ENCODE measurements at regions of chr15 and their contacts with region 1.

Region 1: GRCh38 chr15:41774062-41774881 is at the start of gene MAPKBP1:
- DNase-seq: peak; percentile 99
- ATAC-seq: peak; percentile 93
- H3K4me3 Mint-ChIP-seq: peak within 1 kb of the TSS; percentile 91
- H3K27ac Mint-ChIP-seq: peak within 1 kb of the TSS; percentile 95
- H3K4me1 Mint-ChIP-seq: peaks cover 55% of the 10 kb centered on the region
- H3K27me3 Mint-ChIP-seq: no peaks in the 10 kb centered on the region
- total RNA-seq, gene MAPKBP1: 24.7 to 33.1 TPM

Region 2: GRCh38 chr15:41465822-41466421 is 308.4 kb before region 1 on chr15:
- CTCF ChIA-PET with region 1: interaction called, 18 read pairs
- DNase-seq: no peak
- ATAC-seq: peak; percentile 39
- H3K4me3 Mint-ChIP-seq: no peak overlapping the region
- H3K27ac Mint-ChIP-seq: no peak overlapping the region
- H3K4me1 Mint-ChIP-seq: peaks cover 12% of the 10 kb centered on the region
- H3K27me3 Mint-ChIP-seq: no peaks in the 10 kb centered on the region

Region 3: DNA sequence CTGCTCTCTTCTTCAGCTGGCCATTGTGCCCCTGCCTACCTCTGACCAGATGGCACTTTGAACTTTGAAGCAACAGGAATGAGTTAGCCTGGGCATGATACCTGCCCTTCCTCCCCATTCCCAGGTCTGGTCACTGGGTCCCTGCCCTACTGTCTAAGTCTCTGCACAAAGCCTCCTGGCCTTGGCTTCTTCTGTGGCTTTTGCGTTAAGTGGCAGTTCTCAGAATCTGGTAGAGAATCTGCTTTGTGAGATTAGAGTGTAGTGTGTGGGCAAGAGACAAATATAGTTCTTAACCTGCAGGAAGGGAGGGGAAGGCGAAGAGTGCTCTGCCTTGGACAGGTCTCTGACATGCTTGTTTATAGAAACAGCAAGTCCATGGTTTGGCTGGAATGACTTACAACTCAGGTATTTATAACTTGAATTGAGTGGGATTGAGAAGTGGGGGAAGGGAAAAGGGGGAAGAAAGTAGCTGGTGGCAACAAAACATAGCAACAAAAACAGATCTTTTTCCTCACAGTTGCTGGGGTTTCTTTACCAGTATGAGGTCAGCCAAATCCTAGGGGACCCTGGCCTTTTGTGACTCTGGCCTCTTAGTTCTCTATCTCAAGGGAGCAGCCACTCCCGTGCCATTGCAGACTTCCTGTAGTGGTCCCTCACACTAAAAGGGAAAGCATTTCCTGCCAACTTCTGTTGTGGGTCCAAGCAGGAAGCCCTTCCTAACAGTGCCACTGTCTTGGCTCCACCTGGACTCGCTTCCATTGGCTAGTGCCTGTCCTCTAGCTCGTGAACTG is 16.7 kb after region 1 on chr15:
- CTCF ChIA-PET with region 1: interaction called, 98 read pairs
- DNase-seq: no peak
- ATAC-seq: peak; percentile 79
- H3K4me3 Mint-ChIP-seq: peak overlapping the region; percentile 18
- H3K27ac Mint-ChIP-seq: peak overlapping the region; percentile 71
- H3K4me1 Mint-ChIP-seq: peaks cover 34% of the 10 kb centered on the region
- H3K27me3 Mint-ChIP-seq: no peaks in the 10 kb centered on the region

Region 4: DNA sequence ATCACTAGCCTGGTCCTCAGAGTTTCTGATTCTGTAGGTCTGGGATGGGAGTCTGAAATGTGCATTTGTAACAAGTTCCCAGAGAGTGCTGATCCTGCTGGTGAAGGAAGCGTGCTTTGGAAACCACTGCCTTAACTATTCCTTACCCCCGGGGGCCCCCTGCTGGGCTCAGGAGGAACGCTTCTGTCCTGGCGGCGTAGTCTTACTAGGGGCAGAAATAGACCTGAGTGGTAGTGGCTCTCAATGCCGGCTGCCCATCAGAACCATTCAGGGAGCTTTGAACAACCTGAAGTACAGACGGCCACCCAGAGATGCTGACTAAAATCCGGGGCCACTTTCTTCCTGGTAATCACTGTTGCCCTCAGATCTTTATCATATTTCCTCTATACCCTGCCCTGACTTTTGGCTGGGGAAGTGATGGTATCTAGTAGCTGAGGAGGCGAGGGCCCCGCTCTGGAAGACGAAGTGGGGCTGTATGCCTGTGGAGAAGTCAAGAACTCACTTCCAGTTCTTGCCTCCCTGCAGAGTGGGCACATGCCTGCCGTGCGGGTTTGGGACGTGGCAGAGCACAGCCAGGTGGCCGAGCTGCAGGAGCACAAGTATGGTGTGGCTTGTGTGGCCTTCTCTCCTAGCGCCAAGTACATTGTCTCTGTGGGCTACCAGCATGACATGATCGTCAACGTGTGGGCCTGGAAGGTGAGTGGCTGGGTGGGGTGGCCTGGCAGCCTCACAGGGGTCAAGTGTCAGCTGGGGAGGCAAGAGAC is 37.3 kb after region 1 on chr15:
- CTCF ChIA-PET with region 1: interaction called, 247 read pairs
- DNase-seq: peak; percentile 83
- ATAC-seq: peak; percentile 91
- H3K4me3 Mint-ChIP-seq: no peak overlapping the region
- H3K27ac Mint-ChIP-seq: peak overlapping the region; percentile 56
- H3K4me1 Mint-ChIP-seq: peaks cover 25% of the 10 kb centered on the region
- H3K27me3 Mint-ChIP-seq: no peaks in the 10 kb centered on the region

Region 5: GRCh38 chr15:41827880-41828806 is 53.9 kb after region 1 on chr15 and contains the start of gene JMJD7:
- CTCF ChIA-PET with region 1: interaction called, 24 read pairs
- DNase-seq: peak; percentile 95
- ATAC-seq: peak; percentile 90
- H3K4me3 Mint-ChIP-seq: peak within 1 kb of the TSS; percentile 81
- H3K27ac Mint-ChIP-seq: peak within 1 kb of the TSS; percentile 71
- H3K4me1 Mint-ChIP-seq: peaks cover 41% of the 10 kb centered on the region
- H3K27me3 Mint-ChIP-seq: peaks cover 2% of the 10 kb centered on the region
- total RNA-seq, gene JMJD7: 12.0 to 21.9 TPM

Region 6: DNA sequence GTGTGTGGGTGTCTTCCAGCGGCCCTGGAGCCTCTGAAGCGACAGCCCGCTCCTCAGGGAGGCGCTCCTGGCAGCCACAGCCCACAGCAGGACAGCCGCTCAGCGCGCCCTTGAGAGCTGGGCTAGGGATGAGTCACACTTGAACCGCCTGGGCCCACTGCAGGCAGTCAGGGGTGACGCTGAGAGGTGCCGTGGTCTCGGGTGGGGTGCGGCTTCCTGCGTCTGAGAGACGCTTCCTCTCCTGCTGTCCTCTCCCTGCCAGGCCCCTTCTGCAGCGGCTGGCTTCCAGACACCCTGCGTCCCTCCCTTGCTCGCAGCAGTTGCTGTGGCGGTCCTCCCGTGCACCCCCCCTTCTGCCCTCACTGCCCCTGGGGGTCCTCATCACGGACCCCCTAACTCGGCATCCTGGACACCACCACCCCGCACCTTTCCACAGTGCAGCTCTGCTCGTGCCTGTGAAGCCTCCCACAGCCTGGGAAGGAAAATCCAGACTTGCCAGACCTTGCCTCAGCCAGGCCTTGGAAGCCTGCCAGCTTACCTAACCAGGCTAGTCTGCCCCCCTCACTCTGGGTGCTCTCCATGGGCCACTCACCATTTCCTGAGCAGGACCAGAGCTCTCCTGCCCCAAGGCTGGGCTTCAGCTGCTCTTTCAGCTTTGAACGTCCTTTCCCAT is 120.7 kb after region 1 on chr15:
- CTCF ChIA-PET with region 1: interaction called, 130 read pairs
- DNase-seq: peak; percentile 96
- ATAC-seq: peak; percentile 98
- H3K4me3 Mint-ChIP-seq: peak overlapping the region; percentile 68
- H3K27ac Mint-ChIP-seq: peak overlapping the region; percentile 96
- H3K4me1 Mint-ChIP-seq: peaks cover 34% of the 10 kb centered on the region
- H3K27me3 Mint-ChIP-seq: no peaks in the 10 kb centered on the region

Region 7: DNA sequence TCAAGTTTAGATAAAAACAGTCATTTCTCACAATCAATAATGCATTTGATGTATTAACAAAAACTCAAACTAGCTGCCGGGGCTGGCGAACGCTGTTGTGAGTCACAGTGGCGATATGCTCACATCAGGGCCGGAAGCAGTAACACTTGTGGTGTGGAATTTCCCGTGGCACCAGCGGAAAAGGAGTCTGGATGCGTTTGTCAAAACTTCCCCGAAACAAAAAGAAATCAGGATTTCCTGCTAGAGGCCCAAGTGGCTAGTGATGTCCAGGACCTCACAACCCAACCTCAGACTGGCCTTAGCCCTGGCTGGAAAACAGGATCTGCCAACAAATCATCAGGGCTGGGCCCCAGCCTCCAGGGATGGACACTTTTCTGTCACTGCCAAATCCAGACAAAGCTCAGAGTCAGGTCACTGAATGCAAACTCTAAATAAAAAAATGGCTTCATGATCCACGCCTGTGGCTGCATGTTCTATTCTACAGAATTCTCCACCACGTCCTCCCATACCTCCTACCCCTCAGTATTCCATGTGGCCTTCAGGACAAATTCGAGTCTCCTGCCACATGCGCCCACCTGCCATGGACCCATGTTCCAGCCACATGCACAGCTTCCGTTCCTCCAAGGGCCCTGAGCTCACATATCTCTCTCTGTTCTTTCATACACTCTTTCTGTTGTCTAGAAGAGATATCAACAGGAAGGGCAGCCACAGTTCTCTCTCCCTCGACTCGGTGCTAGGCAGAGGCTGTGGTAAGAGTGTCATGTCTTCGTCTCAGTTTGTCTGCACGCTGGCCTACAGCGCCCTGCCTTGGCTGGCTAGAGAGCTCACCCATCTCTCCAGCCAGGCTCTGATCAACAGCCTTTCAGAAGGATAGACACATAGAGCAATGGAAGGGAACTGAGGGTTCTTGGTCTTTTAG is 162.6 kb after region 1 on chr15:
- CTCF ChIA-PET with region 1: interaction called, 77 read pairs
- DNase-seq: peak; percentile 89
- ATAC-seq: peak; percentile 82
- H3K4me3 Mint-ChIP-seq: peak overlapping the region; percentile 52
- H3K27ac Mint-ChIP-seq: peak overlapping the region; percentile 100
- H3K4me1 Mint-ChIP-seq: peaks cover 71% of the 10 kb centered on the region
- H3K27me3 Mint-ChIP-seq: no peaks in the 10 kb centered on the region

Measured in activated CD8-positive, alpha-beta memory T cell treated with anti-CD3 and anti-CD28 coated beads, Interleukin-2, amount 10 ng/mL, durations not matched to agents 7 days and 5 days (primary cell).